Activated naive CD4-positive, alpha-beta T cell treated with anti-CD3 and anti-CD28 coated beads for 36 hours (primary cell): ENCODE measurements at regions of chr1 and their contacts with region 1.

Region 1: GRCh38 chr1:204207136-204207616 is 6.6 kb downstream of the GOLT1A start:
- DNase-seq: peak; percentile 83
- H3K4me3 Mint-ChIP-seq: no peak overlapping the region
- H3K27ac Mint-ChIP-seq: no peak overlapping the region
- H3K4me1 Mint-ChIP-seq: peaks cover 11% of the 10 kb centered on the region
- H3K27me3 Mint-ChIP-seq: peaks cover 15% of the 10 kb centered on the region

Region 2: DNA sequence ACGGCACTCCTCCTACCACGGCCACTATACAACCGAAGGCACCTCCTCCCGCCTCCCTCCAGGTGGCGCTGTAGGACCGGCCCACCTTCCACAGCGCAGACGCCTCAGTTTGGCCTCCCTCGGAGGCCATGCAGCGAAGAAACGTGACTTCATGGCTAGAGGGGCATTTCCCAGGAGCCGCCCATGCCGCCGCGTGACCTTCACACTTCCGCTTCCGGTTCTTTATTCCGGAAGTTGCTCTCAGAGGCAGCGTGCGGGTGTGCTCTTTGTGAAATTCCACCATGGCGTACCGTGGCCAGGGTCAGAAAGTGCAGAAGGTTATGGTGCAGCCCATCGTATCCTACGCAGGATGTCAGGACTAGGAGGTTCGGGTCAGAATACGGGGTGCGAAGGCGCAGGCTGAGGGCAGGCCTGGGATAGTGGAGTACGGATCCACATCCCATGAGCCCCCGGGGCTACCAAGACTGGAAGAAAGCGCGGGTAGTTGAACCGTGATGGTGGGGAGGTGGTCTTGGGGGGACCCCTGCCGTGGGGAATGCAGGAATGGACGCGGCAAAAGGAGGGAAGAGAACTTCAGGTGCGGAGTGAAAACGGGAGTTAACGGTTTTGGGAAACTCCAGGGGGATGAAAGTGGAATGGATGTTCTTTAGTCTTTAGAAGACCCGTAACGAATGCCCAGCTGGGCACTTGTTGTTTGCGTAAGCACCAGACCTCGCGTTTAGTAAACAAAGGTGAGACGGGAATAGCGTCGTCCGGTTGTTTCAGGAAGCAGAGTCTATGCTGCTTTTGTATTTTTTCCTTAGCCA is 345.6 kb before region 1 on chr1 and contains the start of gene SNRPE:
- CTCF ChIA-PET with region 1: interaction called, 6 read pairs
- intact Hi-C with region 1: loop called (anchors 1 kb)
- DNase-seq: peak; percentile 98
- H3K4me3 Mint-ChIP-seq: peak within 1 kb of the TSS; percentile 100
- H3K27ac Mint-ChIP-seq: peak within 1 kb of the TSS; percentile 95
- H3K4me1 Mint-ChIP-seq: peaks cover 25% of the 10 kb centered on the region
- H3K27me3 Mint-ChIP-seq: no peaks in the 10 kb centered on the region
- total RNA-seq, gene SNRPE: 366 to 370 TPM

Region 3: GRCh38 chr1:204190212-204191211 is 16.7 kb before region 1 on chr1:
- CTCF ChIA-PET with region 1: interaction called, 38 read pairs
- intact Hi-C with region 1: no loop called
- DNase-seq: peak; percentile 52
- H3K4me3 Mint-ChIP-seq: peak overlapping the region; percentile 0
- H3K27ac Mint-ChIP-seq: no peak overlapping the region
- H3K4me1 Mint-ChIP-seq: peaks cover 22% of the 10 kb centered on the region
- H3K27me3 Mint-ChIP-seq: peaks cover 38% of the 10 kb centered on the region

Region 4: DNA sequence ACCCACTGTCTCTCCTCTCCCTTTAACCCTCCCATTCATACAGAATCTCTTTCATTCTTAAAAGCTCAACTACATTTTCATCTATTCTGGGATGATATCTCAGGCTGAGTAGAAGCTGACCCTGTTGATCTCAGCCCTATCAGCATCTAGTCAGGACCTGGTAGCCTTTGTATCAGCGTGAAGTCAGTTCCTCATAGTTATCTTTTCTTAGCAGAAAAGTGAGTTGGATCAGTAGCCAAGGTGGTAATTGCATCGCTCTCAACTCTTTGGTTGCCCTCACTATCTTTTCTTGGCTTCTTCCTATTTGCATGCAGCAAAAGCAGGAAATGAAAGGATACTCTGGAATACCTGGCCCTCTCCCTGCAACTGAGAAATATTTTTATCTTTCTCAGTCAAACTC is 20.2 kb after region 1 on chr1:
- CTCF ChIA-PET with region 1: interaction called, 10 read pairs
- intact Hi-C with region 1: no loop called
- DNase-seq: no peak
- H3K4me3 Mint-ChIP-seq: no peak overlapping the region
- H3K27ac Mint-ChIP-seq: no peak overlapping the region
- H3K4me1 Mint-ChIP-seq: no peaks in the 10 kb centered on the region
- H3K27me3 Mint-ChIP-seq: no peaks in the 10 kb centered on the region

Region 5: GRCh38 chr1:204288021-204288588 is 80.9 kb after region 1 on chr1:
- CTCF ChIA-PET with region 1: no interaction called
- intact Hi-C with region 1: no loop called
- DNase-seq: no peak
- H3K4me3 Mint-ChIP-seq: no peak overlapping the region
- H3K27ac Mint-ChIP-seq: no peak overlapping the region
- H3K4me1 Mint-ChIP-seq: peaks cover 20% of the 10 kb centered on the region
- H3K27me3 Mint-ChIP-seq: peaks cover 2% of the 10 kb centered on the region